HEK293 (cell line): ENCODE measurements at regions of chr6 and their contacts with region 1.

Region 1: DNA sequence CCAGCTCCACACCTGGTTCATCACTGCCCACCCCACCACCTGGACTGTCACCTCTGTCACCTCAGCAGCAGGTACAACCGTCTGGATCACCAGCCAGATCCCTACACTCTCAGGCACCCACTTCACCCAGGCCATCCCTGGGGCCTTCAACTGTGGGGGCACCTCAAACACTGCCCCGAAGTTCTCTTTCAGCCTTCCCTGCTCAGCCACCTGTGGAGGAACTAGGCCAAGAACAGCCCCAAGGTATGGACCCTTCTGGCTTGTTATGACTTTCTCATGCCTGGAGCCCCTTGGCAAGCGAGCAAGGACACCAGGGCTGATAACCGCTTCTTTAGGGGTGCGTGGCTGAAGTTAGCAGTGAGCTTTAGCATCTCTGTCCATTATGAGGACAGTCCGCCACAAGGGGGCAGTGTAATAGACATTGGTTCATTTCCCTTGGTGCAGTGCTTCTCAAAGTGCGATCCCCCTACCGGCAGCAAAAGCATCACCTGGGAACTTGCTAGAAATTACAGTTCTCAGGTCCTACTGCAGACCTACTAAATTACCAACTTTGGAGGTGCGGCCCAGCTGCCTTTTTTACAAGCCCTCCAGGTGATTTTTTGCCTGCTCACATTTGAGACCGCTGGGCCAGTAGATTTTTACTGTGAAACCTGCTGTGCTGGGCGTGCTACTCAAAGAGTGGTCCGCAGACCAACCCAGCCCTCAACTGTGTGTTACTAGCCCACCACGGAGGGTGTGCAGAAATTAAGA is 32.5 kb downstream of the PNPLA1 start:
- H3K4me3 ChIP-seq: no peak overlapping the region
- H3K27ac ChIP-seq: no peak overlapping the region
- H3K4me1 ChIP-seq: no peaks in the 10 kb centered on the region
- CTCF ChIP-seq: peak; percentile 89

Region 2: DNA sequence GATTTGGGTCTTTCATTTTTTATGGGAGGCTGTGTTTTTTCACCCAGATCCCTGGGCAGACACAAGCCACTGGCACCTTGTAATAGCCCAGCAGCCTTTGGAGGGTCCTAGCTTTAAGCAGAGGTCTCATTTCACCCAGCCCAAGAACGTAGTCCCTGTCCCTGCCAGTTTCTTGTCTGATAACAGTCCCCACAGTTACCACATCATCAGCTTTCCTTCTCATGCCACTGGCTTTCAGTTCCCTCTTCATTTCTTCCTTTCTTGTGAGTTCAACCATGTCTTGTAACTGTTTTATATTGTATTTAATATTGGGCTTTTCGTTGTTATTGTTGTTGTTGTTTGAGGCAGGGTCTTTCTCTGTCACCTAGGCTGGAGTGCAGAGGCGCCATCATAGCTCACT is 21.9 kb before region 1 on chr6:
- CTCF ChIA-PET with region 1: interaction called, 142 read pairs
- POLR2A ChIA-PET with region 1: no interaction called
- H3K4me3 ChIP-seq: no peak overlapping the region
- H3K27ac ChIP-seq: no peak overlapping the region
- H3K4me1 ChIP-seq: no peaks in the 10 kb centered on the region
- CTCF ChIP-seq: no peak

Region 3: GRCh38 chr6:36314221-36315014 is 12.0 kb after region 1 on chr6:
- CTCF ChIA-PET with region 1: interaction called, 83 read pairs
- POLR2A ChIA-PET with region 1: no interaction called
- H3K4me3 ChIP-seq: no peak overlapping the region
- H3K27ac ChIP-seq: no peak overlapping the region
- H3K4me1 ChIP-seq: peaks cover 13% of the 10 kb centered on the region
- CTCF ChIP-seq: no peak

Region 4: DNA sequence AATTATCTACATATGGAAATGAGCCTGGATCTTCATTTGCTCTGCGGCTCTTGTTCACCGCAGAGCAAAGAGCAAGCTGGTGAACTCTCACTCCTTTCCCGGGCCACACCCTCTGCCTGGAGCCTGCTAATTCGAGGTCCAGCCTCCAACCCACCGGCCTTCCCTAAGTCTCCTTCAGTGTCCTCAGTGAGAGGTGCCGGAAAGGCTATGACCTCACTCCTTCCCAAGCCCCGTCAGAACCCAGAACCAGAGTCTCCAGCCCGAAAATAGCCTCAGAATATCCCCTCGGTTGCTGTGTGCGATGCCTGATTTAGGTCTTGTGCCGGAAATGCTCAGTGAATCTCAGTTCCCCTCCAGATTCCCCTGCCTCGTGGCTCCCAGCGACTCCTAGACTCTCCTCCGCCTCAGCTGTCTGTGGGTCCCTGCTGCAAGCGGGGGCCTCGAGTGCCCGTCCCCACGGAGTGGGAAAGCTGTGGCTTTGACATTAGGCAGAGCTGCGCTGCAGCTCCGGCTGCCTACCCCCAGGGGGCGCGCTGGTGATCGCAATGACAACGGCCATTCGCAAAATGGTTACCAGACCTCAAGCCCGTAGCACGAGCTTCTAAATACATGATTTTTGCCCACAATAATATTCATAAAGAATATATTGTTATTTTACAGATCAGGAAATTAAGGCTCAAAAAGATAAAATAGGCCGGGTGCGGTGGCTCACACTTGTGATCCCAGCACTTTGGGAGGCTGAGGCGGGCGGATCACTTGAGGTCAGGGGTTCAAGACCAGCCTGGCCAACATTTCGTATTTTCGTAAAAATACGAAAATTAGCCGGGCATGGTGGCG is 38.4 kb after region 1 on chr6:
- CTCF ChIA-PET with region 1: interaction called, 57 read pairs
- POLR2A ChIA-PET with region 1: interaction called, 3 read pairs
- H3K4me3 ChIP-seq: no peak overlapping the region
- H3K27ac ChIP-seq: no peak overlapping the region
- H3K4me1 ChIP-seq: no peaks in the 10 kb centered on the region
- CTCF ChIP-seq: peak; percentile 77

Region 5: GRCh38 chr6:36350681-36351571 is 48.5 kb after region 1 on chr6:
- CTCF ChIA-PET with region 1: interaction called, 172 read pairs
- POLR2A ChIA-PET with region 1: no interaction called
- H3K4me3 ChIP-seq: no peak overlapping the region
- H3K27ac ChIP-seq: 0 out of 2 replicates have a peak overlapping the region, but pooled peaks have one; percentile 6
- H3K4me1 ChIP-seq: peaks cover 3% of the 10 kb centered on the region; the same call in 1 of the 2 replicates
- CTCF ChIP-seq: no peak

Region 6: DNA sequence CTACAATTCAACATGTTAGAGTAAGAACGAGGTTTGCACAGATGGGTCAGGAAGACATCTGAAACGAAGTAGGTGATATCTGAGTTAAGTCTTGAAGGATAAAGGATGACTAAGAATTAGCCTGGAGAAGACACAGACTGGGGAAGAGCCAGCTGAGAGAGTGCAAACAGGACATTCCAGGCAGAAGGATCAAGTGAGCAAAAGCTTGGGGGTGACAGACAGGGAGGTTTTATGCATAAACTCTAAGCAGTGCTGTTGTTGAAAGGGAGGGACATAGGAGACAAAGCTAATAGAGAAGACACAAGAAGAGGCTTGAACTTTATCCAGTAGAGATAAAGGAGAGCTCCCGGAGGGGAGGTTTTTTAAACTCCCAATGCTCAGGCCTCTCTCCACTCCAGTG is 100.1 kb after region 1 on chr6:
- CTCF ChIA-PET with region 1: no interaction called
- POLR2A ChIA-PET with region 1: no interaction called
- H3K4me3 ChIP-seq: no peak overlapping the region
- H3K27ac ChIP-seq: no peak overlapping the region
- H3K4me1 ChIP-seq: no peaks in the 10 kb centered on the region
- CTCF ChIP-seq: no peak